BJ (cell line): ENCODE measurements at regions of chr22 and their contacts with region 1.

Region 1: GRCh38 chr22:20013382-20013871 is 3.2 kb downstream of the ARVCF start:
- DNase-seq: no peak
- H3K4me3 ChIP-seq: no peak overlapping the region
- H3K27me3 ChIP-seq: peaks cover 5% of the 10 kb centered on the region
- CTCF ChIP-seq: peak; percentile 81

Region 2: GRCh38 chr22:19962233-19962908 is 51.1 kb before region 1 on chr22:
- CTCF ChIA-PET with region 1: interaction called, 97 read pairs
- POLR2A ChIA-PET with region 1: no interaction called
- DNase-seq: no peak
- H3K4me3 ChIP-seq: no peak overlapping the region
- H3K27me3 ChIP-seq: no peaks in the 10 kb centered on the region
- CTCF ChIP-seq: peak; percentile 78

Region 3: DNA sequence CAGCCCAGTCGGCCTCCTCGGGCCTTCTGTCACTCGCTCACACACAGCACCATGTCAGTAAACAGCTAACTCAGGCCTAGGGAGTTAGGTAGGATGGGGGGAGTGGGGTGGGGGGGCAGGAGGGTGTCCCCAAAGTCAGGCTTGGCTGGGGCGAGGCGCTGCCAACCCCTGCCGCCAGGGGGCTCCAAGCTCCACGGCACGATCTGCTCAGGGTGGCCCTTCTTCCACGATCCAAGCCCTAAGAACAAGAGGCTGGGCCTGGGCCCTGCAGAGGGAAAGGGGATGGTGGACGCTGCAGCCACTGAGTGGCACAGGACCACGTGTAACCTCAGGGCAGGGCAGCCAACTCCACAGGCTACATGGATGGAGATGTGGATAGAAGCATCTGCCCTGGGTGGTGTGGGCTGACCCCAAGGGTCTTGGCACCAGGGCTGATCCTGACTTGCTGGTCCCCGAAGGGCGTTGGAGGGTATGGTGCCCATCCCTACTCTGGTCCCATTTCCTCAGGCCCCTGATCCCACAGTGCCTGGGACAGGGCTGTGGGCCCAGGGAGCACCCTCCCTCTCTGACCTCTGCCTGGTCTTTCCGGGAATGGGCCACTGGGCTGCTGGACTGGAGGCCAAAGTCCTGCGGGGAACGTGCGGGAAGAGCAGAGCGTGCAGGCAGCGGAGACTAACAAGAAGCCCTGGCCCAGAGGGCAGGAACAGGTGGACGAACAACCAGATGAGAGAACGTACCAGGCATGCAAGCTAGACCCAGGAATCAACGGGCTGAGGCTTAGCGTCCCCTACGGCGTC is 42.8 kb before region 1 on chr22:
- CTCF ChIA-PET with region 1: interaction called, 97 read pairs
- POLR2A ChIA-PET with region 1: no interaction called
- DNase-seq: no peak
- H3K4me3 ChIP-seq: no peak overlapping the region
- H3K27me3 ChIP-seq: no peaks in the 10 kb centered on the region
- CTCF ChIP-seq: peak; percentile 97

Region 4: DNA sequence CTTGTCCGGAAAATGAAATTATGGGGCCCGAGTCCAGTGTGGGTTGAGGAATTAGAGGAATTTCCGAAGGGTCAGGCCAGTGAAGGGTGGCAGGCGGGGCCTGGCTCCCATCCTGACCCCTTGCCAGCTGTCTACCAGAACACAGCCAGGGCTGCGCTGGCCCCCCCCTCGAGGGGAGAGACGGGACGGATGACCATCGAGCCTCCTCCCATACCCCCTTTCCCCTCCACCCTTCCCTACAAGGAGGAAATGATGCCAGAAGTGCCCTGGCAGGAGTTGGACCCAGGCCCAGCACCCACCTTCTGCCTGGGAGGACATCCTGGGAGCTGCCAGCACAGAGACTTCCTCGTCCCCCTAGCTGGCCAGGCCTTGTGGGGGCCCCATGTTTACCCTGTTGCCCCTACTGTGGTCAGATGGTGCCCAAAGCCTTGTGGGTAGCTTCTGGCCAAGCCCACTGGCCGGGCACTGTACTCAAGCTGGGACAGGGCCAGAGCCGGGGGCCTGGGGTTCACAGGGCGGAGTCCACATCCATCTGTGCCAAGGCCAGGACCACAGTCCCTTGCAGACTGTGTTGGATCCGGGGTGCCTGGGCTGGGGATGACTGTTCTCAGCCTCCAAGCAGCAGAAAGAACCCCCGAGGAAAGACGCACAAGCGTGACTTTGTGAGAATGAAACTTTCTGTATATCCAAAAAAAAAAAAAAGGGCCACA is 17.6 kb before region 1 on chr22:
- CTCF ChIA-PET with region 1: interaction called, 27 read pairs
- POLR2A ChIA-PET with region 1: no interaction called
- DNase-seq: no peak
- H3K4me3 ChIP-seq: no peak overlapping the region
- H3K27me3 ChIP-seq: no peaks in the 10 kb centered on the region
- CTCF ChIP-seq: no peak

Region 5: DNA sequence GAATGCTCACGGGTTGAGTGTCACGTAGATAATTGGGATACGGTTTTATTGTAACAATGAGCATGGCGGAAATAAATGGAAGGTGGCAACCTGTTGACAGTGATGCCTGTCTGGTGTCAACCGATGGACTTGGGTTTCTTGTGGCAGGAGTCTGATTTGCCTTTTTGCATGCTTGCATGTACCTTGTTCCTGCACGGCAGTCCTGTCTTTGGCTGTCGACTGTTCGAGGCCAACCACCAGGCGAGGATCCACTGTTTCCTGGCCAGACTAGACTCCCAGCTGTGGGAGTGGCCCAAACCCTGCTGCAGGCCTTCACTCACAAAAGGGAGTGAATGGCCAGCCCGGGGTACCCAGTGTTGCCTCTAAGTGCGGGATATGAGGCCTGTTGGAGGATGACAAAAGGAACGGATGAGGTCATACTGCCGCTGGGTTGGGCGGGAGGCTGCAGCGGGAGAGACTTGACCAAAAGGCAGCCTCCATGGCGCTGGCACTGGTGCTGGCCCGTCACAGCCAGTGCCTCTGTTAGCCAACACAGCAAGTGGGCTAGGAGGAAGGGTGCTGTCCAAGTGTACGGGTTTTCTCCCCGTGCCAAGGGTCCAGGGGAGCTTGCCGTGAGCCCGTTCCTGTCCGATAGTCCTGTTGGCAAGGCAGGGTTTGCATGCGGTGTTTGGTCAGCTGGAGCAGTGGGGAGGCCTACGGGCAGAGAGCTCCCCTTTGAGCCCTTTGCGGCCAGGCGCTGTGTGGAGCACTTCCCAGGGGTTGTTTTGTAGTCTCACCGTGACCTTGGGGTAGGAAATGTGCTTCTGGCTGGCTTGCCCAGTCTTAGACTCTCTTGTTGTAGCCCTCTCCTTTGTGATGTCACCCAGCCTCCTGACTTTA is 67.6 kb after region 1 on chr22:
- CTCF ChIA-PET with region 1: no interaction called
- POLR2A ChIA-PET with region 1: no interaction called
- DNase-seq: no peak
- H3K4me3 ChIP-seq: peak overlapping the region; percentile 58
- H3K27me3 ChIP-seq: no peaks in the 10 kb centered on the region
- CTCF ChIP-seq: no peak